ENCODE measurements at regions of chr17 and their contacts with region 1.

Region 1: DNA sequence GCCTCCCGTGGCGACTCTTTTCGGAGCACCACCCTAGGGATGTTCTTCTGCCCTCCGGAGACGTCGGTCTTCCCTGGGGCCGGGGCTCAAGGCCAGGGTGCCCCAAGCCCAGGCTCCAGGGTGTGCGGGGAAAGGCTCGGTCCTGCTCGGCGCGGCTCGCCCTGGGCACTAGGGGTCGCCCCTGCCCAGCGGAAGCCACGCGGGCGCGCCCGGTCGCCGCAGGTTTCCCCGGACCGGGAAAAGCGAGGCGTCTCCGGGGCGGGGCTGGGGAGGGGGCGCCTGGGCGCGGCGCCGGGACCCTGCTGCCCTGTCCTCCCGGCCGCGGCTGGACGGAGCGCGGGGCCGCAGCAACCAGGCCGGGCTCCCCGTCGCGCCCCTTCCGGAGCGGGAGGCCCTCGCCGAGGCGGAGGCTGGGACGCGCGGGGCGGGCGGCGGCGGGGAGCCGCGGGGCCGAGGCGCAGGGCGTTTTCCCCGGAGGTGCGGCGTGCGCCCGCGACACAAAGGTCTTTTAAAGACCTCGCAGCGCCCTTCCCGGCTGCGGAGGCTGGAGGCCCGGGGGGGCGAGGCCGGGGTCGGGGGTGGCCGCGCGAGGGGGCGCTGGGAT is 76.4 kb downstream of the MRC2 start:
- DNase-seq: peak; percentile 69
- H3K4me3 ChIP-seq: peak overlapping the region; percentile 58 to 79 (median 68)
- H3K27ac ChIP-seq: peak overlapping the region; percentile 91
- H3K4me1 ChIP-seq: peaks cover 21% of the 10 kb centered on the region
- H3K27me3 ChIP-seq: no peaks in the 10 kb centered on the region
- CTCF ChIP-seq: peak; percentile 42 to 84

Region 2: DNA sequence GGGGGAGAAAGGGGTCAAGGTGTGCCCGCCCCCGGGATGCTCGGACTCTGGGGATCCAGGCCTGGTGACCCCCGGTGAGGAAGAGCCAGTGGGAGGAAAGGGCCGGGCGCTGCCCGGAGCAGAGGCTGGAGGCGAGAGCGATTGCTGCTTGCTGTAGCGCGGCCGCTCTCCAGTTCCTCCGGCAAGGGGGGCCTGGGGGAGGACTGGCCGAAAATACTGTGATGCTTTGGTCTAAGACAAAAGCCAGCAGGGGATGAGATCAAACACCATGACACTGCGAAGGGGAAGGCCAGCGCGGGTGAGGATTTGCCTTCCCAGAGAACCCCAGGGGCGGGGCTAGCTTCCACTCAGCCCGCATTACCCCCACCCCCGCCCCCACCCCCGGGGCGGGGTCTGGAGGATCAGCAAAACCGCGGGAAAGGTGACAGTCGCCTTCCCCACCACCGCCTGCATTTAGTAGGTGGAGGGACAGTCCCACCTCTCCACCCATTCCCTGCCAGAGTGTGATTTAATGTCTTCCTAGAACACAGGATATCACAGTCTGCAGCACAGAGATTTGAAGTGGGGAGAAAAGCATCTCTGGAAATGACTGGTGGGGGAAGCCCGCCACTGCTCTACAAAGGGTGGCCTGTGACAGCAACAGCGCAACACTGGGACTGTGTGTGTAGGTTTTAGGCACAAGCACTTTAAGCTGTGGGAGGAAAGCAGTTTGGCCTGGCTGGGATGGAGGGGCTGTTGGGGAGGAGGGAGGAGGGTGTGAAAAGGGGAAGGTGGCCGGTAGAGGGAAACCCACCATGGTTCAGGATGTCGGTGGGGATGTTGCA is 50.7 kb before region 1 on chr17:
- CTCF ChIA-PET with region 1: no interaction called
- dilution Hi-C with region 1: no loop called
- in situ Hi-C with region 1: no loop called
- intact Hi-C with region 1: no loop called
- DNase-seq: no peak
- H3K4me3 ChIP-seq: peak overlapping the region in 1 of 3 experiments; percentile 21
- H3K27ac ChIP-seq: no peak overlapping the region
- H3K4me1 ChIP-seq: peaks cover 36% of the 10 kb centered on the region
- H3K27me3 ChIP-seq: no peaks in the 10 kb centered on the region
- CTCF ChIP-seq: no peak

Region 3: DNA sequence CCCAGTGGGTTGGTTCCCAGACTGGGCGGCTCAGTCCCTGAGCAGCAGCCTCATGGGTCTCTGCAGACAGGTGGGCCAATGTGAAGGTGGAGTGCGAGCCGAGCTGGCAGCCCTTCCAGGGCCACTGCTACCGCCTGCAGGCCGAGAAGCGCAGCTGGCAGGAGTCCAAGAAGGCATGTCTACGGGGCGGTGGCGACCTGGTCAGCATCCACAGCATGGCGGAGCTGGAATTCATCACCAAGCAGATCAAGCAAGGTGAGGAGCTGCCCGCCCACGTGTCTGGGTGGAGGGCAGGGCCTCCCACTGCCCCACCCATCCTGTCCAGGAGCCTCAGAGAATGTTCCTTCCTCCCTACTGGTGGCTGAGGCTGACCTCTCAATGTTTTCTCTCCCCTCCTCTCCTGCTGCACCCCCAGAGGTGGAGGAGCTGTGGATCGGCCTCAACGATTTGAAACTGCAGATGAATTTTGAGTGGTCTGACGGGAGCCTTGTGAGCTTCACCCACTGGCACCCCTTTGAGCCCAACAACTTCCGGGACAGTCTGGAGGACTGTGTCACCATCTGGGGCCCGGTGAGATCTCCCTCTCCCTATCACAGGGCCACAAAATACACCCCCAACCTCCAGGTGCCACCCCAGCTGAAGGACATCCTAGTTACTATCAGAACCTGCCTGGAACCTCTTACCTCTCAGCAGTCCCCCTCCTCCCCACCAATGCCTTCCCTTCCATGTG is 32.1 kb before region 1 on chr17:
- CTCF ChIA-PET with region 1: no interaction called
- dilution Hi-C with region 1: no loop called
- in situ Hi-C with region 1: no loop called
- intact Hi-C with region 1: loop called (anchors 1 kb)
- DNase-seq: peak; percentile 97
- H3K4me3 ChIP-seq: peak overlapping the region in 2 of 3 experiments; percentile 28 to 32
- H3K27ac ChIP-seq: peak overlapping the region; percentile 63
- H3K4me1 ChIP-seq: peaks cover 56% of the 10 kb centered on the region
- H3K27me3 ChIP-seq: no peaks in the 10 kb centered on the region
- CTCF ChIP-seq: peak; percentile 22 to 54

Region 4: DNA sequence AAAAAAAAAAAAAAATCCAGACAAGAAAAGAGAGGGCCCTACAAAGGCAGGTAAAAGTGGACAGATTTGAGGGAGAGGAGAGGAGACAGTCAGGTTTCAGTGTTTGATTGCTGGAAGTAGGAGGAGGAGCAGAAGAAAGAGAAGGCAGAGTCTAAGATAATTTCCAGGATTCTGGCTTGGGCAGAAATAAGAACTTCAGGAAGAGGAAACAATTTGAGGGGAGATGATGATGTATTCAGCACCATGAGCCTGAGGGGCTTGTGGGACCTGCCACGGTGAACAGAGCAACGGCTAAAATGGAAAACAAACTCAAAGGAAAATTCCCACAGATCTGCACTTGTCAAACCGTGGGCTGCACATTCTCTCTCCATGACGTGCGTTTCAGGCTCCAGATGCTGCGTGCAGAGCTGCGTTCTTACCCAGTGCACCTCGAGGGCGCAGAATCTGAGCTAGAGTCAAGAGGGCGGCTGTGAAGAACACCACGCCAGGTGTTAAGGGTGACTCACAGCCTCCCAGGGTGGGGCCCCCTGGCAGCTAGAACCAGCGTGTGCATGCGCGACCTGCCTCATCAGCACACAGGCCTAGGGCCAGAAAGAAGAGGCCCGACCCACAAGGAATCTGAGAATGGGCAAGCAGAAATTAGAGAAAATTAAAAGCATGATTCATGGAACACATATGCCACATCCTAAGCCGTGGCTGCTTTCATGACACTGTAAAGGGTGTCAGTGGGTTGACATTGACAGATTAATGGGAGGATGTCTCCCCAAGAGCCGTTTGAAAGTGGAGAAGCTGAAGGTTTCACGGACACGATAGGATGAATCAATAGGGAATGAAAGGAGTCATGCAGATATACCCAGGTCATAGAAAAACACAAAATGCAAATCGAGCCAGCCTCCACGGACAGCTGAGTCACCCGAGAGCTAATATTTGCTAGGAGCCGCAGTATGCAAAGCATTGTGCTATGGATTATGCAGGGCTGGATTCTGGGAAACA is 75.1 kb after region 1 on chr17:
- CTCF ChIA-PET with region 1: no interaction called
- dilution Hi-C with region 1: no loop called
- in situ Hi-C with region 1: no loop called
- intact Hi-C with region 1: loop called (anchors 1 kb)
- DNase-seq: peak; percentile 99
- H3K4me3 ChIP-seq: peak overlapping the region in 2 of 3 experiments; percentile 7 to 22
- H3K27ac ChIP-seq: peak overlapping the region; percentile 96
- H3K4me1 ChIP-seq: peaks cover 41% of the 10 kb centered on the region
- H3K27me3 ChIP-seq: no peaks in the 10 kb centered on the region
- CTCF ChIP-seq: no peak

Region 5: GRCh38 chr17:62892870-62893338 is 189.0 kb after region 1 on chr17:
- CTCF ChIA-PET with region 1: no interaction called
- dilution Hi-C with region 1: no loop called
- in situ Hi-C with region 1: no loop called
- intact Hi-C with region 1: loop called (anchors 1 kb)
- DNase-seq: peak; percentile 98
- H3K4me3 ChIP-seq: no peak overlapping the region
- H3K27ac ChIP-seq: peak overlapping the region; percentile 82
- H3K4me1 ChIP-seq: peaks cover 40% of the 10 kb centered on the region
- H3K27me3 ChIP-seq: no peaks in the 10 kb centered on the region
- CTCF ChIP-seq: no peak

Region 6: DNA sequence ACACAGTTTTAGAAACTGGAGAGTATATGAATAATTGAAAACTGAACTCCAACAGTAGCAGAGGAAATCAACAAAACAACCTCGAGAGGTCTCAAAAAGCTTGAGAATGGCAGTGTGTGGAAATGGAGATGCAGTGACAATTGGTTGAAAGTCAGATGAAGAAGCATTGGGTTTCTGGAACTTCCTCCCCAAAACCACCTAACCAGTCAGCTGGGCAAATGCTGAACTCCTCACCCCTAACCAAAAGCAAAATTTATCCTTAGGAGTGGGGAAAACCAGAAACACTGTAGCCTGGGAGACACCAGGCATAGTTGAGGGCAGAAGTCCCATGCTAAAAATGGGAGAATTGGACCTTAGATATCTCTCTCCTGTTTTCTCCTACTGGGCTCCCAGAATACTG is 372.1 kb after region 1 on chr17:
- CTCF ChIA-PET with region 1: no interaction called
- dilution Hi-C with region 1: no loop called
- in situ Hi-C with region 1: no loop called
- intact Hi-C with region 1: loop called (anchors 5 kb)
- DNase-seq: no peak
- H3K4me3 ChIP-seq: no peak overlapping the region
- H3K27ac ChIP-seq: no peak overlapping the region
- H3K4me1 ChIP-seq: peaks cover 14% of the 10 kb centered on the region
- H3K27me3 ChIP-seq: no peaks in the 10 kb centered on the region
- CTCF ChIP-seq: no peak

Region 7: DNA sequence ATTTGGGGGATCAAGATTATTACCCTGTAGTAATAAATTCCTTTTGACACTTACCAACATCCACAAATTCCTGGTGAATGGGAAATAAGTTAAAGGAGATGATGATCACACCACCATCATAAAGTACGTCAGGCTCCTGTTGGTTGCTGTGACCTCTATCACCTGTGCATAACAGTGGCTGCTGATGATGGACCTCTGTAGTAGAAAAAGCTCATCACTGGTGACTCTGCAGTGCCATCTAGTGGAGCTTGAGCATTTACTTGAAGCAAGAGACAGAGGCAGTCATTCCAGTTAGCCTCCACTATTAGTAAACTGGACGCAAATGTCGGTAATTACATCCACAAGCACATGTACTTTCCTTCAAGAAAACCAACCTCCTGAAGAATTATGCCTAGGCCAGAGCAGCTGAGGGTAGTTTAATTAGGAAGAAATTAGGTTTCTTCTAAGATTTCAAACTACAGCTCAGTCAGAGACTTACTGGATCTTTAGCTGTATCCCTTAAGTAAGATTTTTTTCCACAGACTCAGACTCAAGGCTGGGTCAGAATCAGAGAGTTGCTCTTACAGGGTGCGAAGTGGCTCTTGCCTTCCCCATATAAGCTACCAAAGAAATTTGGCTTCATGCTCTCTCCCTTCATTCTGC is 702.9 kb after region 1 on chr17:
- CTCF ChIA-PET with region 1: no interaction called
- dilution Hi-C with region 1: no loop called
- in situ Hi-C with region 1: loop called in 1 of 2 experiments (anchors 25 kb)
- intact Hi-C with region 1: loop called (anchors 1 kb)
- DNase-seq: peak; percentile 77
- H3K4me3 ChIP-seq: no peak overlapping the region
- H3K27ac ChIP-seq: peak overlapping the region; percentile 55
- H3K4me1 ChIP-seq: peaks cover 7% of the 10 kb centered on the region
- H3K27me3 ChIP-seq: no peaks in the 10 kb centered on the region
- CTCF ChIP-seq: peak; percentile 80 to 86

Measured in mammary epithelial cell (primary cell).